ENCODE measurements at regions of chr3 and their contacts with region 1.

Region 1: DNA sequence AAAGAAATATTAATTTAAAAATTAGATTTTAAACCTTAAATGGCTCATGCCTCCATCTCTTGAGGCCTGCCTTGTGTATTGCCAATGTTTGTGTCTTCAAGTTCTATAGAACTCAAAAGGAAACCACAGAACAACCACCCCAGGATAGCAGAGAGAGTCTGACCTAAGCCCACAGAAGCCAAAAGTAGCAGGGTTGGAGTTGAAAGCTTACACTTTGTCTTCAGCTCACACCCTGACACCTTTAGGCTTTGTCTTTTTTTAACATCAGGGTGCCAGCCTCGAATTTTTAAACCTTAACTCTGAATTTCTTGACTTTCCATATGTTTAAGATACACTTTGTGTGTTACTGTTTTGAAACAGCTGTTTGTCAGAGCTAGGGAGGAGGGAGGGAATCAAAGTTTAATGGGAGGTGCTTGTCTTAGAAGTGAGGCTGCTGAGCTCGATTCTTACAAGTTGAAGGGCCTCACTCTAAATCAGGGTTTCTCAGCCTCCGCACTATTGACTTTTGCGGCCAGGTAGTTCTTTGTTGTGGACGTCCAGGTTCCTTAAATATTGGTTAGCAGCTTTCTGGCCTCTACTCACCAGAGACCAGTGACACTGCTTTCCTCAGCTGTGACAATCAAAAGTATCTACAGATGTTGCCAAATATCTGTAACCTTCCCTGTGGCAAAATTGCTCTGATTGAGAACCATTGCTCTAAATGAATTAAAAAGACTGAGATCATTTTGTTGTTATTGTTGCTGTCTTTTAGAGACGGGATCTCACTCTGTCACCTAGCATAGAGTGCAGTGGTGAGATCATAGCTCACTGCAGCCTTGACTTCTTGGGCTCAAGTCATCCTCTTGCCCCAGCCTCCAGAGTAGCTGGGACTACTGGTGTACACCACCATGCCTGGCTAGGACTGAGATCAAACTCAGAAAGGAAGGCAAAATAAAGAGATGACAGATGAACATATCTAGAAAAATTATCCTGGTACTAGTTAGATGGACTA is 139.2 kb upstream of the EOMES start:
- DNase-seq: peak in 1 of 2 donors; percentile 65
- ATAC-seq: peak; percentile 90 to 99 (median 92)
- H3K4me3 ChIP-seq: no peak overlapping the region
- H3K4me3 Mint-ChIP-seq: peak overlapping the region; percentile 50
- H3K27ac ChIP-seq: peak overlapping the region; percentile 13
- H3K27ac Mint-ChIP-seq: peak overlapping the region; percentile 61 to 69
- H3K4me1 ChIP-seq: peaks cover 26% of the 10 kb centered on the region
- H3K4me1 Mint-ChIP-seq: peaks cover 39 to 40% of the 10 kb centered on the region in 2 donors
- H3K27me3 ChIP-seq: no peaks in the 10 kb centered on the region
- H3K27me3 Mint-ChIP-seq: peaks cover 0 to 3% of the 10 kb centered on the region in 2 donors
- CTCF ChIP-seq: no peak

Region 2: GRCh38 chr3:27360113-27361078 is 500.9 kb before region 1 on chr3:
- intact Hi-C with region 1: no loop called
- DNase-seq: no peak
- ATAC-seq: no peak
- H3K4me3 ChIP-seq: no peak overlapping the region
- H3K4me3 Mint-ChIP-seq: no peak overlapping the region
- H3K27ac ChIP-seq: no peak overlapping the region
- H3K27ac Mint-ChIP-seq: peak overlapping the region; percentile 8 to 36
- H3K4me1 ChIP-seq: peaks cover 5% of the 10 kb centered on the region
- H3K4me1 Mint-ChIP-seq: peaks cover 7 to 23% of the 10 kb centered on the region in 2 donors
- H3K27me3 ChIP-seq: no peaks in the 10 kb centered on the region
- H3K27me3 Mint-ChIP-seq: no peaks in the 10 kb centered on the region
- CTCF ChIP-seq: no peak

Region 3: GRCh38 chr3:27840807-27841594 is 20.3 kb before region 1 on chr3:
- intact Hi-C with region 1: loop called (anchors 2 kb)
- DNase-seq: peak in 1 of 2 donors; percentile 12
- ATAC-seq: peak; percentile 83 to 95 (median 84)
- H3K4me3 ChIP-seq: no peak overlapping the region
- H3K4me3 Mint-ChIP-seq: peak overlapping the region; percentile 51
- H3K27ac ChIP-seq: peak overlapping the region; percentile 14
- H3K27ac Mint-ChIP-seq: peak overlapping the region in 1 of 2 donors; percentile 30
- H3K4me1 ChIP-seq: peaks cover 18% of the 10 kb centered on the region
- H3K4me1 Mint-ChIP-seq: peaks cover 32 to 39% of the 10 kb centered on the region in 2 donors
- H3K27me3 ChIP-seq: no peaks in the 10 kb centered on the region
- H3K27me3 Mint-ChIP-seq: peaks cover 22 to 23% of the 10 kb centered on the region in 2 donors
- CTCF ChIP-seq: no peak

Region 4: GRCh38 chr3:27880969-27881892 is 19.9 kb after region 1 on chr3:
- intact Hi-C with region 1: loop called (anchors 2 kb)
- DNase-seq: peak in 1 of 2 donors; percentile 79
- ATAC-seq: peak; percentile 89 to 94 (median 93)
- H3K4me3 ChIP-seq: peak overlapping the region; percentile 6
- H3K4me3 Mint-ChIP-seq: peak overlapping the region; percentile 85
- H3K27ac ChIP-seq: peak overlapping the region; percentile 65
- H3K27ac Mint-ChIP-seq: peak overlapping the region; percentile 59 to 74
- H3K4me1 ChIP-seq: peaks cover 26% of the 10 kb centered on the region
- H3K4me1 Mint-ChIP-seq: peaks cover 43 to 51% of the 10 kb centered on the region in 2 donors
- H3K27me3 ChIP-seq: no peaks in the 10 kb centered on the region
- H3K27me3 Mint-ChIP-seq: peaks cover 9 to 23% of the 10 kb centered on the region in 2 donors
- CTCF ChIP-seq: no peak

Region 5: GRCh38 chr3:27985369-27986035 is 124.2 kb after region 1 on chr3:
- intact Hi-C with region 1: no loop called
- DNase-seq: no peak
- ATAC-seq: no peak
- H3K4me3 ChIP-seq: no peak overlapping the region
- H3K4me3 Mint-ChIP-seq: no peak overlapping the region
- H3K27ac ChIP-seq: no peak overlapping the region
- H3K27ac Mint-ChIP-seq: no peak overlapping the region
- H3K4me1 ChIP-seq: no peaks in the 10 kb centered on the region
- H3K4me1 Mint-ChIP-seq: peaks cover 0 to 6% of the 10 kb centered on the region in 2 donors
- H3K27me3 ChIP-seq: no peaks in the 10 kb centered on the region
- H3K27me3 Mint-ChIP-seq: peaks cover 7 to 26% of the 10 kb centered on the region in 2 donors
- CTCF ChIP-seq: no peak

Measured in natural killer cell (primary cell).